ENCODE measurements at regions of chr3 and their contacts with region 1.

Region 1: DNA sequence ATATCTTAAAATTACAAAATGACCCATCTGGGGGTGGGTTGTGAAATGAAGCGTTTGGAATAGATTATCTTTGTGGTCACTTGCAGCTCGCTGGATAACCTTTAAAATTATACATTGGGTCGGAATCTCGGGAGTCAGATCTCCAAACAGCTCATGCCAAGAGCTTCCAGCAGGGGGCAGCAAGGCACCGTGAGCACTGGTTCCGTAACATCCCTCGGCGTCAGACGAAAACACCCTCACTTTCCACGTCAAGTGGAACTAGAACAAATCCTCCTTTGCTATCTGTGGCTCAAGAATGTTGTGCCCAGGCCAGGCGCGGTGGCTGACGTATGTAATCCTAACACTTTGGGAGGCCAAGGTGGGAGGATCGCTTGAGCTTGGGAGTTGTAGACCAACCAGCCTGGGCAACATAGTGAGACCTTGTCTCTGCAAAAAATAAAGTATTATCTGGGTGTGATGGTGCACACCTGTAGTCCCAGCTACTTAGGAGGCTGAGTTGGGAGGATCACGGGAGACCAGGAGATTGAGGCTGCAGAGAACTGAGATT is 31.1 kb downstream of the UMPS start:
- DNase-seq: peak; percentile 57
- H3K4me3 ChIP-seq: no peak overlapping the region
- CTCF ChIP-seq: peak; percentile 89

Region 2: DNA sequence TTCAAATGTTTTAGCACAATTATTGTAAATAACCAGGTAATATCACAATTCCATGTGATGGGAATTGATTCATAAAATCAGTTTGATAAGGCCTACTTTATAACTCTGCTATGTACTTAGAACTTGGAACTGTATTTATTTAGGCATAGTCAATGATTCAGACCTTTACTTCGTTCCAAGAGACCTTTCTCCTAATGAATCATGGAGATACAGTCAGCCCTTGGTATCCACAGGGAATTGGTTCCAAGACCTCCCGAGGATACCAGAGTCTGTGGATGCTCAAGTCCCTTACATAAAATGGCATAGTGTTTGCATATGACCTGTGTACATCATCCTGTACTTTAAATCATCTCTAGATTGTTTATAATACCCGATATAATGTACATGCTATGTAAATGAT is 91.9 kb before region 1 on chr3:
- CTCF ChIA-PET with region 1: no interaction called
- POLR2A ChIA-PET with region 1: no interaction called
- DNase-seq: peak; percentile 61
- H3K4me3 ChIP-seq: no peak overlapping the region
- CTCF ChIP-seq: no peak

Region 3: DNA sequence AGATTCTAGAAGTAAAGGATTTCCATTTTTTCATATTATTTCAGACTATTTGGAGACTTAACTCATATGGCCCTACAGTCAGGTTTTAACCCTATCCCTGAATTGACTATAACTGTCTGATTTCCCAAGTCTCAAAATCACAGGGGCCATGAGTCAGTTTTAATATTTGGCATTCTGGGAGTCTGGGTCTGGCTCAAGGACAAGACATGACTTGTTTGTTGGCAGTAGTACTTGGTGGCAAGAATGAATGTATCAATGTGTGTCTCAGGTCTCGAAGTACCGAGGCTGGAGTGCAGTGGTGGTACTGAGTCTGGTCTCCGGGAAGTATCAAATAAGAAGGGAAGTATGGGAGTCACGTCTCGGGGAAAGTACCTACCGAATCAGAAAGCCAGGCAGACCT is 20.3 kb before region 1 on chr3:
- CTCF ChIA-PET with region 1: interaction called, 21 read pairs
- POLR2A ChIA-PET with region 1: interaction called, 4 read pairs
- DNase-seq: no peak
- H3K4me3 ChIP-seq: no peak overlapping the region
- CTCF ChIP-seq: no peak

Region 4: DNA sequence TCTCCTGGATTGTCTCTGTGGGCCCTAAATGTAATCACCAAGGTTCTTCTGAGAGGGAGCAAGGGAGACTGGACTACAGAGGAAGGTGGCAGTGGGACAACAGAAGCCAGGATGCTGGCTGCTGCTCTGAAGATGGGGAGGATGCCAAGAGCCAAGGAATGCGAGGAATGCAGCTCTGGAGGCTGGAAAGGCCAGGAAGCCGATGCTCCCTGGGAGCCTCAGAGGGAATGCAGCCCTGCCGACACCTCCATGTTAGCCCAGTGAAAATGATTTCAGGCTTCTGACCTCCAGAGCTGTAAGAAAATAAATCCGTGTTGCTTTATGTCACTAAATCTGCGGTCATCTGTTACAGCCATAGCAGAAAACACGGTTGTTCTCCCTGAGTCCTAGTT is 13.0 kb after region 1 on chr3:
- CTCF ChIA-PET with region 1: interaction called, 67 read pairs
- POLR2A ChIA-PET with region 1: interaction called, 3 read pairs
- DNase-seq: no peak
- H3K4me3 ChIP-seq: no peak overlapping the region
- CTCF ChIP-seq: no peak

Region 5: DNA sequence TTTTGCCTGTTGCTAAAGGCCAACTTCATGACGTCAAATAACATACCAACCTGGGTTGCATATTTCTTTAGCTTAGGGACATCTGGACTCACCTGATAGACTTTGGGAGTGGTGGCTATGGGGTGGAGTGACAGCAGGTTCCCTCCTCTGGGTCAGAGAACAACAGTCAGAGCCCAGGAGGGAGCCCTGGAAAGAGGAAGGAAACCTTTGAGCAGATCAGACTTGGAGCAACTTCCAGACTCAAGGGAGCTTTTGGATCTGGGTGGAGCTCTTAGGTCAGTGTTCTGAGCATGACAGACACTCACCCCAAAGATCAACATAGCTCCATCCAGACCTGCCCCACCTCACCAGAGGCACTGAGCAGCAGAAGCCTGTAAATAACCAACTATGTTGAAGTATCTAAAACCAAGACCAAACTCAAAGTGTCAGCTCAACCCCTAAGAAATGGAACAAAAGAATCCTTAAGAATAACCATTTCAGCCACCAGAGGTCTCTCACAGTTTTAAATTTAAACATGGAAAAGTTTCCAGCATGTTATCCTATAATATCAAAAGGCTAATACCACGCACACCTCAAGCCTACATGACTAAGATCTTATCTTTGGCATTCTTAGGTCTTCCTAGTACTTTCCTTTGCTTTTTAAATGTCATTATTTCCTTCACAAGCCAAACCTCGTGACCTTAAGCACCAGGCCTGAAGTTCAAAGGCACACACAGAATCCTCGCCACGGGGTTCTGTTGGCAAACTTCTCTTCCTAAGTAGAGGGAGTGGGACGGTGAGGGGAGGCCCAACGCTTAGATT is 25.3 kb after region 1 on chr3:
- CTCF ChIA-PET with region 1: interaction called, 52 read pairs
- POLR2A ChIA-PET with region 1: interaction called, 3 read pairs
- DNase-seq: no peak
- H3K4me3 ChIP-seq: no peak overlapping the region
- CTCF ChIP-seq: no peak

Region 6: DNA sequence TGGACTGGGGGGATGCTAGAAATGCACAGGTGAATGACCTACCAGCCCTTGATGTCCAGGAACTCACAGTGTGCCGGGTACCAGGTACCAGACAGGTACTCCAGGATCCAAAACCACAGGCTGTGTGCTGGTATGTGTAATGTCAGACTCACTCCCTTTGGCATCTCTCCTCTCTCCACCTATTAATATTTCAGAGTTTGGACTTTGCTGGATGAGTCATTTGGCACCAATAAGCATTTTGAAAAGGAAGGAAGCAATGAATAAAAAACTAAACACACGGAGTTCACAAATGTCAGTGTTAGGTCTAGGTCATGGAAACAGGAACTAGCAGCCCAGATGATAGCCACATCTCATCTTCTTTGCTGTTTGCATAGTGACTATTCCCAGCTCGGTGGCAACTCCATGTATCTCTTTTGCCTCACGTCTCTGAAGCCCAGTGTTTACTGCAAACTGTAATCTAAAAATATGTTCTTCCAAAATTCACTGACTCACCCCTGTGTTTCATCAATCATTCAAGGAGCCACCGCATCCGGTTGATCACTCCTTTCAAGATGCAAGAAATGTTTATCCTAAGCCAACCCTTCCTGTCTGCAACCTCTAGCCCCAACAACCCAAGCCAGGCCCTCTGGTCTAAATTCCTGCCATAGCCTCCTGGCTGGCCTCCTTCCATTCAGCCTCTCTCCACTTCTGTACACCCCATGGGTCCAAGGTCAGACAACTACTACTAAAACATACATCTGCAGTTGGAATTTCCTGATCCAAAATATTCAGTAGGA is 117.4 kb after region 1 on chr3:
- CTCF ChIA-PET with region 1: interaction called, 11 read pairs
- POLR2A ChIA-PET with region 1: interaction called, 3 read pairs
- DNase-seq: peak; percentile 77
- H3K4me3 ChIP-seq: no peak overlapping the region
- CTCF ChIP-seq: no peak

Region 7: DNA sequence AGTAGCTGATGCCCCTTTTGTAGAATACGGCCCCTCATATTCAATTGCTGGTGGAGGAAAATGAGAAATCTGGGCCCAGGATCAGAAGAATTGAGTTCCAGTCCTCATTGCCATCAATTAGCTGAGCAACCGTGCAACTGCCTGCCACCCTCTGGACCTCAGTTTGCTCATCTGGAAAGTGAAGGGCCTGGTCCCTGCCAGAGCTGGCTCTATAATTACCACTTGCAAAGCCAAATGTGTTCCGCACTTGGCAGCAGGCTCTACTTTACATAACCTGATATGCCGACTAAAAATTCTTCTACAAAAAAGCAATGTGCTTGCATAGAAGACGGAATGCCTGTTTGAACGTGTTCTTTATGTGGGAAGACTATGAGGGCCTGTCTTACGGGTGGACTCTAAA is 134.4 kb after region 1 on chr3:
- CTCF ChIA-PET with region 1: interaction called, 467 read pairs
- POLR2A ChIA-PET with region 1: interaction called, 5 read pairs
- DNase-seq: no peak
- H3K4me3 ChIP-seq: no peak overlapping the region
- CTCF ChIP-seq: no peak

Region 8: GRCh38 chr3:124928333-124929202 is 167.2 kb after region 1 on chr3:
- CTCF ChIA-PET with region 1: interaction called, 17 read pairs
- POLR2A ChIA-PET with region 1: no interaction called
- DNase-seq: no peak
- H3K4me3 ChIP-seq: no peak overlapping the region
- CTCF ChIP-seq: peak; percentile 75